ENCODE measurements at regions of chr15 and their contacts with region 1.

Region 1: DNA sequence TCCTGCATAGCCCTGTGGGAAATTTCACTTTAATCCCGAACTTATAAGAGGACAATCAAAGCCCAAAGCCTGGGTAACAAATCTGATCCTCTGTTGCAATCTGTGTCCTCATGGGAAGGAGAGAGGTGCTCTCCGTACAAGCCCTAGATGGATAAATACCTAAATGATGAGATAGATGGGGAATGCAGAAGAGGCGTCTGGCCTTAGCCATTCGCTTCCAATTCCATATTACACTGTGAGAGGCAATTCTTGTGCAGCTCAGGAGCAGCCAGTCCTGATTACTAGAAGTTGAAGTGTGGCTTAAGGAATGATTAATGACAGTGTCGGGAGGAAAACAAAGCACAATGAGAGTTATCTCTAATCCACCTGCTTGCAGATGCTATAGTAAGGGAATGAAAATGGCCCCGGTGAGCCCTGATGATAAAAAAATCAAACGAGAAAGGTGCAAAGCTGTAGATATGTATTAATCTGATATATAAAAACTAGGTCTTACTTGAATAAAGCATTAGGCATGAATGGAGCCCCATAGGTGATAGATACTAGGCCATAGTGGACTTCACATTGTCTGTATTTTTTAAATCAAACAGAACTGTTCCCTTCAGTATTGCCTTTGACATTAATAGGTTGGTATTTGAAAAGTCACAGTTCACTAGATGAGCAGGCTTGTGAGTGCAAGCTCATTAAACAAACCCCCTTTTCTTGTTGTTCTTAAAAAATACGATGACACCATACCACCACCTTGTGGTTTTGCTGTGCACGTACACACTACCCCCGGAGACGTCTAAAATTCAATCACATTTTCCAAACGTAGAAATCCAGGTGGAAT is 54.2 kb upstream of the TMCO5A start:
- DNase-seq: peak; percentile 38
- ATAC-seq: peak; percentile 75; the same call in 1 of the 2 replicates
- H3K4me3 ChIP-seq: no peak overlapping the region
- H3K27ac ChIP-seq: no peak overlapping the region
- H3K4me1 ChIP-seq: peaks cover 13 to 20% of the 10 kb centered on the region in 2 experiments
- H3K27me3 ChIP-seq: peaks cover 19% of the 10 kb centered on the region
- CTCF ChIP-seq: peak; percentile 31 to 91 (median 78); a peak in 5 of 6 replicates
- POLR2A ChIP-seq: no peak
- RAD21 ChIP-seq: peak; percentile 68

Region 2: GRCh38 chr15:36883713-36884517 is 996.3 kb before region 1 on chr15:
- CTCF ChIA-PET with region 1: no interaction called
- POLR2A ChIA-PET with region 1: no interaction called
- RAD21 ChIA-PET with region 1: no interaction called
- intact Hi-C with region 1: loop called (anchors 1 kb)
- DNase-seq: peak; percentile 63
- ATAC-seq: peak; percentile 99
- H3K4me3 ChIP-seq: no peak overlapping the region
- H3K27ac ChIP-seq: no peak overlapping the region
- H3K4me1 ChIP-seq: no peaks in the 10 kb centered on the region
- H3K27me3 ChIP-seq: no peaks in the 10 kb centered on the region
- CTCF ChIP-seq: peak; percentile 57 to 85 (median 85); a peak in 5 of 6 replicates
- POLR2A ChIP-seq: no peak
- RAD21 ChIP-seq: peak; percentile 82

Region 3: DNA sequence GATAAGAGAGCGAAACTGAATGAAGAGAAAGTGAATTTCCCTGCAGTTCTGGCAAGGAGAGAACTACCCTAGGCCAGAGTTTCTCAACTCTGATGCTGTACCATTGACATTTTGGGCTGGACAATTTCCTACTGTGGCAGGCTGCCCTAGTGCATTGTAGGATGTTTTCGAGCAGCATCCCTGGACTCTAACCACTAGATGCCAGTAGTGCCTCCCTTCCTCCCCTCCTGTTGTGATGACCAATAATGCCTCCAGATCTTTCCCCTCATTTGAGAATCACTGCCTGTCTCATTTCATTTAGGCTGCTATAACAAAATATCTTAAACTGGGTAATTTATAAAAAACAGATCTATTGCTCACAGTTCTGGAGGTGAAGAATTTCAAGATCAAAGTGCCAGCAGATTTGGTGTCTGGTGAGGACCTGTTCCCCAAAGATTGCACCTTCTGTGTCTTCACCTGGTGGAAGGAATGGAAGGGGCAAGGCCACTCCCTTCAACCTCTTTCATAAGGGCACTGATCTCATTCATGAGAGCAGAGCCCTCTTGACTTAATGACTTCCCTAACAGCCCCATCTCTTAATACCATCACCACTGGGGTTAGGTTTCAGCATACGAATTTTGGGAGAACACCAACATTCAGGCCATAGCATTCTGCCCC is 591.0 kb before region 1 on chr15:
- CTCF ChIA-PET with region 1: interaction called, 5 read pairs
- POLR2A ChIA-PET with region 1: no interaction called
- RAD21 ChIA-PET with region 1: no interaction called
- intact Hi-C with region 1: loop called (anchors 2 kb)
- DNase-seq: peak; percentile 8
- ATAC-seq: peak; percentile 91
- H3K4me3 ChIP-seq: no peak overlapping the region
- H3K27ac ChIP-seq: no peak overlapping the region
- H3K4me1 ChIP-seq: no peaks in the 10 kb centered on the region
- H3K27me3 ChIP-seq: no peaks in the 10 kb centered on the region
- CTCF ChIP-seq: peak; percentile 26 to 49 (median 42); a peak in 5 of 6 replicates
- POLR2A ChIP-seq: no peak
- RAD21 ChIP-seq: peak; percentile 29; the same call in 1 of the 2 replicates

Region 4: DNA sequence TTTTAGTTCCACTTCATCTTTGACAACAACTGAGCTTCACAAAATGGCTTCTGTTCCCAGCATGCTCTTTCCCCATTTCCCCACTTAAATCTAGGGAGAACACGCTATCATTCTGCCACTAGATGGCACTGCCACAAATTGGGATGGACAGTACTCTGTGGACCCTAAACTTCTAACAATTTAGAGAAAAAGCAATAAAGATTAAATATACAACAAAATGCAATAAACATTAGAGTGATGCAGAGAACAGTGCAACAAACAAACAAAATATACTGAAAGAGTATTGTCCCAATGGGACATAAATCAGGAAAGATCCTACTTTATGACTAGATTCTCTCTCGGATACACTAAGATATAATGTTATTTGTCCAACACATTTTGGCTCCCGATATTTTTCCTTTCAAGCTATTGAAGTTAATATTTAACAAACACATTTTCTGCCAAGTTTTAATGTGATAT is 115.5 kb before region 1 on chr15:
- CTCF ChIA-PET with region 1: interaction called, 8 read pairs
- POLR2A ChIA-PET with region 1: no interaction called
- RAD21 ChIA-PET with region 1: no interaction called
- intact Hi-C with region 1: loop called (anchors 1 kb)
- DNase-seq: peak; percentile 56
- ATAC-seq: peak; percentile 96
- H3K4me3 ChIP-seq: no peak overlapping the region
- H3K27ac ChIP-seq: no peak overlapping the region
- H3K4me1 ChIP-seq: peaks cover 0 to 4% of the 10 kb centered on the region in 2 experiments; a peak in 2 of 4 replicates
- H3K27me3 ChIP-seq: no peaks in the 10 kb centered on the region
- CTCF ChIP-seq: peak; percentile 26 to 85 (median 72); a peak in 4 of 6 replicates
- POLR2A ChIP-seq: no peak
- RAD21 ChIP-seq: peak; percentile 39; the same call in 1 of the 2 replicates

Region 5: DNA sequence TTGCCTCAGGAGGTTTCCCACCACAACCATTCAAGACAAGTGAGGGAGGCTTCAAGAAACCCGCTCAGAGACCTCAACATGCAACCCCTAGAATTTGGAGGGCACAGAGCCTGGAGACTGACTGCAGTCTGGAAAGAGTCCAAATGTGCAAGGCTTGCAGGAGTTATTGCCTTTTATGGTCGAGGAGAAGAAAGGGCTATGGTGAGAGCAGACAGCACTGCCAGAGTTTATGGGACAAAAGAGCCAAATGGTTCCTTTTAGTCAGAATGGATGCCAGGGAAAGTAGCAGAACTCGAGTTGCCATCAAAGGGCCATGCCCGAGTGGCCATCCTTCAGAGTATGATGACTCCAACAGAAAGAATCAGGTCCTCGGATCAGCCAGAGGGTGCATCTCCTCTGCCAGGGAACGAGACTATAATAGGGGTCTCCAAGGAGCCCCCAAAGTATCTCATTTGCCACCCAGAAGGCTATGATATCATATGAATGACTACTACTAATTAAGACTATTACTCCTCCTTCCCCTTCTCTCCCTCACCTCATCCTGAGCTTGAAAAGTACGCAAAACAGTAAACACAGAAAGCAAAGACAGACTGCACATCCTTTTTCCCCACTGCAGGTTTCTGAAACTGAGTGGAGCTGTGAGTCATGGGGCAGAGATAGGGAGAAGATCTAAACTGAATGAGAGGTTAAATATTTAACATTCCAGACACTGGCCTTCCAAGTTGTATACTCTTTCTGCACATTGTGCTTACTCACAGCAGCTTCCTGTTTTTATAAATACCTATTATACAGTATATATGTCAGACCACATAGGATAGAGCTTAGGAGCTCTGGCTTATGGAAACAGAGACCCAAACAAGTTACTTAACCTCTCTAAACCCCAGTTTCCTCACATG is 20.4 kb after region 1 on chr15:
- CTCF ChIA-PET with region 1: no interaction called
- POLR2A ChIA-PET with region 1: no interaction called
- RAD21 ChIA-PET with region 1: no interaction called
- intact Hi-C with region 1: no loop called
- DNase-seq: no peak
- ATAC-seq: no peak
- H3K4me3 ChIP-seq: no peak overlapping the region
- H3K27ac ChIP-seq: no peak overlapping the region
- H3K4me1 ChIP-seq: peaks cover 0 to 7% of the 10 kb centered on the region in 2 experiments; a peak in 1 of 4 replicates
- H3K27me3 ChIP-seq: no peaks in the 10 kb centered on the region
- CTCF ChIP-seq: no peak
- POLR2A ChIP-seq: no peak
- RAD21 ChIP-seq: no peak

Region 6: GRCh38 chr15:37951999-37952398 is 71.8 kb after region 1 on chr15:
- CTCF ChIA-PET with region 1: no interaction called
- POLR2A ChIA-PET with region 1: no interaction called
- RAD21 ChIA-PET with region 1: no interaction called
- intact Hi-C with region 1: no loop called
- DNase-seq: no peak
- ATAC-seq: no peak
- H3K4me3 ChIP-seq: no peak overlapping the region
- H3K27ac ChIP-seq: no peak overlapping the region
- H3K4me1 ChIP-seq: no peaks in the 10 kb centered on the region
- H3K27me3 ChIP-seq: peaks cover 14% of the 10 kb centered on the region; the same call in 1 of the 2 replicates
- CTCF ChIP-seq: no peak
- POLR2A ChIP-seq: no peak
- RAD21 ChIP-seq: no peak

Region 7: DNA sequence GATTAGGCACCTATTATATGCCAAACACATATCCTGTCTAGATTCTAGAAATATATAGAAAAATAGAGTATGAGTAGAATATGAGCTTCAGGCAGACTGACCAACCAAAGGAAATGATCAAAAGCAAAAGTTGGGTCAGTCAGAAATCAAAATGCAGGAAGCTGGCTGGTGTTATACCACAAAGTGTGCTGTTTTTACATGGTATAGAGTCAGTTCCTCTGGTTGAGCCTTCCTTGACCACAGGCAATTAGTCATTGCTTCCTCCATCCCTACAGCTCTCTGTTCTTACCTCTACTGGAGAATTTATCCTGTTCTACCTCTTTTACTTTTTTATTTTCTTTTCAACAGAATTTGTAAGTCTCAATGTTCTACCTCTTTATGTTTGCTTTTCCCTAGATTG is 204.1 kb after region 1 on chr15:
- CTCF ChIA-PET with region 1: no interaction called
- POLR2A ChIA-PET with region 1: no interaction called
- RAD21 ChIA-PET with region 1: no interaction called
- intact Hi-C with region 1: no loop called
- DNase-seq: no peak
- ATAC-seq: no peak
- H3K4me3 ChIP-seq: no peak overlapping the region
- H3K27ac ChIP-seq: no peak overlapping the region
- H3K4me1 ChIP-seq: no peaks in the 10 kb centered on the region
- H3K27me3 ChIP-seq: 0 out of 2 replicates have a peak, but pooled peaks cover 6% of the 10 kb centered on the region
- CTCF ChIP-seq: no peak
- POLR2A ChIP-seq: no peak
- RAD21 ChIP-seq: no peak